Naive thymus-derived CD4-positive, alpha-beta T cell (primary cell): ENCODE measurements at regions of chr1 and their contacts with region 1.

Region 1: GRCh38 chr1:198520524-198521254 is 19.8 kb downstream of the ATP6V1G3 start:
- DNase-seq: peak in 3 of 9 donors; percentile 11 to 27 (median 18)
- ATAC-seq: peak; percentile 66
- H3K4me3 ChIP-seq: peak overlapping the region; percentile 44
- H3K4me3 Mint-ChIP-seq: peak overlapping the region; percentile 65 to 79 (median 71)
- H3K27ac ChIP-seq: peak overlapping the region; percentile 81
- H3K27ac Mint-ChIP-seq: peak overlapping the region; percentile 48 to 95 (median 93)
- H3K4me1 ChIP-seq: peaks cover 40 to 48% of the 10 kb centered on the region in 2 donors
- H3K4me1 Mint-ChIP-seq: peaks cover 30 to 77% (median 69%) of the 10 kb centered on the region in 7 donors
- H3K27me3 ChIP-seq: no peaks in the 10 kb centered on the region
- H3K27me3 Mint-ChIP-seq: no peaks in the 10 kb centered on the region

Region 2: GRCh38 chr1:198534548-198535418 is 14.1 kb after region 1 on chr1:
- CTCF ChIA-PET with region 1: interaction called, 9 read pairs
- POLR2A ChIA-PET with region 1: interaction called, 36 read pairs
- intact Hi-C with region 1: loop called (anchors 1 to 2 kb)
- DNase-seq: peak in 1 of 9 donors; percentile 26
- ATAC-seq: peak; percentile 47
- H3K4me3 ChIP-seq: no peak overlapping the region
- H3K4me3 Mint-ChIP-seq: peak overlapping the region; percentile 29 to 83 (median 74)
- H3K27ac ChIP-seq: peak overlapping the region; percentile 65
- H3K27ac Mint-ChIP-seq: peak overlapping the region; percentile 55 to 91 (median 82)
- H3K4me1 ChIP-seq: peaks cover 22 to 48% of the 10 kb centered on the region in 2 donors
- H3K4me1 Mint-ChIP-seq: peaks cover 49 to 96% (median 90%) of the 10 kb centered on the region in 7 donors
- H3K27me3 ChIP-seq: no peaks in the 10 kb centered on the region
- H3K27me3 Mint-ChIP-seq: no peaks in the 10 kb centered on the region

Region 3: DNA sequence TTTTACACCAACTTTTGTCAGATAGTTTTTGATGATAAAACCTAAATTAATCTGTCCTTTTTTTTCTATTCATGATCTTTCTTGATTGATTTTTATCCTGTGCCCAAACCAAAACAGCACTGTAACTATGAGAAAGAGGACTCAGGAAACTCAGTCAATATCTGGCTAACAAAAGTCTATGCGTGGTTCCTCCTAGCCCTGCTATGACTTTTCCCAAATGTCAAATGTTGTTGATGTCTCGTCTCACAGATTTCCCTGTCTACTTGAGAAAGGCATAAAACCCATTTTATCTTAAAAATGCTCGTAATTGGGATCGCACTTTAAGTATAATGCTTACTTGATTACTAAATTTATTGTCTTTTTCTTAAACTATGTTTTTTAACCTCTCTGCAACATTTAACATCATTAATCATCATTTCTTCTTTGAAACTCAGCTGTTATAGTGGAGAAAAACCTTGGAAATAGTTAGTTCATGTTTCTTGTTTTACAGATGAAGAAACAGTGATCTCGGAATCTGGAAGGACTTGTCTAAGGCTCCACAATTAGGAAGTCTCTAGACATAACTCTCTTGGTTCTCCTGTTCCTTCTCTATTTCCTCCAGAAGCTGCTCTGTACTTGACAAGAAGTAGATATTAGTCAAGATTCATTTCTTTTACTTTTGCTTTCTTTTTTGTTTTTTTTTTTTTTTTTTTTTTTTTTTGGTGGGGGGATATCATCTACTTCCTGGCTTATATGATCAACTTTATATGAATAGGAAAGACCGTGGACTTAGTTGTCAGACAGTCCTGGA is 92.0 kb after region 1 on chr1:
- CTCF ChIA-PET with region 1: interaction called, 5 read pairs
- POLR2A ChIA-PET with region 1: interaction called, 4 read pairs
- intact Hi-C with region 1: loop called (anchors 1 kb)
- DNase-seq: peak in 6 of 9 donors; percentile 30 to 52 (median 41)
- ATAC-seq: peak; percentile 62
- H3K4me3 ChIP-seq: peak overlapping the region; percentile 44
- H3K4me3 Mint-ChIP-seq: peak overlapping the region; percentile 66 to 97 (median 82)
- H3K27ac ChIP-seq: peak overlapping the region; percentile 82
- H3K27ac Mint-ChIP-seq: peak overlapping the region; percentile 95 to 100 (median 98)
- H3K4me1 ChIP-seq: peaks cover 56 to 71% of the 10 kb centered on the region in 2 donors
- H3K4me1 Mint-ChIP-seq: peaks cover 52 to 92% (median 73%) of the 10 kb centered on the region in 7 donors
- H3K27me3 ChIP-seq: no peaks in the 10 kb centered on the region
- H3K27me3 Mint-ChIP-seq: no peaks in the 10 kb centered on the region

Region 4: GRCh38 chr1:198657550-198658064 is 136.9 kb after region 1 on chr1:
- CTCF ChIA-PET with region 1: interaction called, 6 read pairs
- POLR2A ChIA-PET with region 1: interaction called, 5 read pairs
- intact Hi-C with region 1: loop called in 1 of 2 experiments (anchors 1 kb)
- DNase-seq: peak in 6 of 9 donors; percentile 59 to 83 (median 70)
- ATAC-seq: peak; percentile 65
- H3K4me3 ChIP-seq: peak overlapping the region; percentile 40
- H3K4me3 Mint-ChIP-seq: peak overlapping the region; percentile 49 to 87 (median 82)
- H3K27ac ChIP-seq: peak overlapping the region; percentile 94
- H3K27ac Mint-ChIP-seq: peak overlapping the region; percentile 90 to 99 (median 97)
- H3K4me1 ChIP-seq: peaks cover 65 to 78% of the 10 kb centered on the region in 2 donors
- H3K4me1 Mint-ChIP-seq: peaks cover 36 to 90% (median 73%) of the 10 kb centered on the region in 7 donors
- H3K27me3 ChIP-seq: no peaks in the 10 kb centered on the region
- H3K27me3 Mint-ChIP-seq: no peaks in the 10 kb centered on the region

Region 5: GRCh38 chr1:199113265-199113869 is 592.7 kb after region 1 on chr1:
- CTCF ChIA-PET with region 1: no interaction called
- POLR2A ChIA-PET with region 1: interaction called, 4 read pairs
- intact Hi-C with region 1: loop called in 1 of 2 experiments (anchors 5 kb)
- DNase-seq: peak; percentile 26 to 64 (median 44)
- ATAC-seq: peak; percentile 80
- H3K4me3 ChIP-seq: no peak overlapping the region
- H3K4me3 Mint-ChIP-seq: peak overlapping the region in 1 of 10 donors; percentile 7
- H3K27ac ChIP-seq: no peak overlapping the region
- H3K27ac Mint-ChIP-seq: peak overlapping the region in 1 of 9 donors; percentile 4
- H3K4me1 ChIP-seq: no peaks in the 10 kb centered on the region
- H3K4me1 Mint-ChIP-seq: peaks cover 0 to 22% (median 0%) of the 10 kb centered on the region in 7 donors
- H3K27me3 ChIP-seq: no peaks in the 10 kb centered on the region
- H3K27me3 Mint-ChIP-seq: no peaks in the 10 kb centered on the region